ENCODE measurements at regions of chr4 and their contacts with region 1.

Region 1: DNA sequence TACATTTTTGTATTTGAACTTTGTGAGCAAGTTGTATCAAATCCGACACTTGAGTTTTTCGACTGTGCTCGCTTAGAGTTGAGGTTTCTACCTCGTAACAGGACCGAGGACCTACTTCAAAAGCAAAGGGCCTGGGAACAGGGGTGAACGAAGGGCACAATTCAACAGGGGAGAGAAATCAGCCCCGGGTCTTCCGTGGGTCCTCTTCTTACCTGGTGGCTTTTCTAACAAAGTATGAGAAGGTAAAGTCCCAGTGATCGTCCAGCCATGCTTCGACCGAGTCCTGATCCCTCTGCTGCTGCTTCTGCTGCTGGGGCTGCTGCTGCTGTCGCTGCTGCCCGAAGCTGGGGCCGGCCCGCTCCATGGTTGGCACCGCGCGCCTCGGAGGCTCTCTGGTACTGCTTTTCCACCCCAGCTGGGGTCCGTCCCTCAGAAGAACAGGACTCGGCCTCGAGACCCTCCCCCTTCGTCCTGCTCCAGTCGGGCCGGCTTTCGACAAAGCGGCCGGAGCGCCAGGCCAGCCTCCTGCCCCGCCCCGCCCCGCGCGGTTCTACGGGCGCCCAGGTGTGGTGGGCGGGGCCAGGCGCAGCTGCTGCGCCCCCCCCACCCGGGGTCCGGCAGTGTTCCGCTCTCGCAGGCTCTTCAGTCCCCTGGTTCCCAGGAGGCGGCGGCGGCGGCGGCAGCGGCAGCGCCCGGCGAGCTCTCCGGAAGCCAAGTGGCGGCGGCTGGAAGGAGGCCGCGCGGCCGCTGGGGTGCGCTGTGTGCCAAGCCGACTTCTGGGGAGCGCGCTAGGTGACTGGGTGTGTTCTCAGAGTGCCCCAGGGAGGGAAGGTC is at the start of gene PDE5A:
- DNase-seq: no peak
- H3K4me3 ChIP-seq: peak within 1 kb of the TSS; percentile 88
- CTCF ChIP-seq: peak; percentile 88

Region 2: GRCh38 chr4:118981839-118982381 is 646.6 kb before region 1 on chr4:
- CTCF ChIA-PET with region 1: interaction called, 14 read pairs
- POLR2A ChIA-PET with region 1: no interaction called
- DNase-seq: peak; percentile 96
- H3K4me3 ChIP-seq: no peak overlapping the region
- CTCF ChIP-seq: peak; percentile 59

Region 3: GRCh38 chr4:119227690-119228089 is 400.8 kb before region 1 on chr4:
- CTCF ChIA-PET with region 1: no interaction called
- POLR2A ChIA-PET with region 1: no interaction called
- DNase-seq: no peak
- H3K4me3 ChIP-seq: no peak overlapping the region
- CTCF ChIP-seq: no peak

Region 4: GRCh38 chr4:119337010-119337409 is 291.5 kb before region 1 on chr4:
- CTCF ChIA-PET with region 1: no interaction called
- POLR2A ChIA-PET with region 1: no interaction called
- DNase-seq: no peak
- H3K4me3 ChIP-seq: no peak overlapping the region
- CTCF ChIP-seq: no peak

Region 5: GRCh38 chr4:119615068-119615719 is 13.3 kb before region 1 on chr4:
- CTCF ChIA-PET with region 1: interaction called, 11 read pairs
- POLR2A ChIA-PET with region 1: no interaction called
- DNase-seq: no peak
- H3K4me3 ChIP-seq: no peak overlapping the region
- CTCF ChIP-seq: no peak

Region 6: GRCh38 chr4:119729835-119730670 is 101.5 kb after region 1 on chr4:
- CTCF ChIA-PET with region 1: interaction called, 22 read pairs
- POLR2A ChIA-PET with region 1: no interaction called
- DNase-seq: peak; percentile 77
- H3K4me3 ChIP-seq: no peak overlapping the region
- CTCF ChIP-seq: no peak

Region 7: DNA sequence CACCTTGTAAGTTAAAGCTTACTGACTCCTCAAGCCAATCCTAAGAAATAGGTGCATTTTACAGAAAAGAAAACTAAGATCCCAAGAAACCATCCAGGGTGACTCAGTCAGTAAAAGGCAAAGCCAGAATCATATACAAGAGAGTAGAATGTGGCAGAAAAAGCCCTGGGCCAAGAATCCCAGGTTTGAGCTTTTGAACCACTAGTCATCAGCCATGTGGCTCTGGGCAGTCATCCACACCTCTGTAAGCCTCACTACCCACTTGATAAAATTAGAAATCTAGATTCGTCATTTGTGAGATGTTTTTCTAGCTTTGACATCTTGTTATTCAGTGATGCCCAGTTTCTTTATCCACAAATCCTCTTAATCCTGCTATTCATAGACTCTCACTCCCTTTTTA is 122.2 kb after region 1 on chr4:
- CTCF ChIA-PET with region 1: interaction called, 15 read pairs
- POLR2A ChIA-PET with region 1: no interaction called
- DNase-seq: no peak
- H3K4me3 ChIP-seq: no peak overlapping the region
- CTCF ChIP-seq: no peak

Region 8: GRCh38 chr4:119785963-119786362 is 157.4 kb after region 1 on chr4:
- CTCF ChIA-PET with region 1: interaction called, 49 read pairs
- POLR2A ChIA-PET with region 1: no interaction called
- DNase-seq: no peak
- H3K4me3 ChIP-seq: no peak overlapping the region
- CTCF ChIP-seq: peak; percentile 16

Region 9: DNA sequence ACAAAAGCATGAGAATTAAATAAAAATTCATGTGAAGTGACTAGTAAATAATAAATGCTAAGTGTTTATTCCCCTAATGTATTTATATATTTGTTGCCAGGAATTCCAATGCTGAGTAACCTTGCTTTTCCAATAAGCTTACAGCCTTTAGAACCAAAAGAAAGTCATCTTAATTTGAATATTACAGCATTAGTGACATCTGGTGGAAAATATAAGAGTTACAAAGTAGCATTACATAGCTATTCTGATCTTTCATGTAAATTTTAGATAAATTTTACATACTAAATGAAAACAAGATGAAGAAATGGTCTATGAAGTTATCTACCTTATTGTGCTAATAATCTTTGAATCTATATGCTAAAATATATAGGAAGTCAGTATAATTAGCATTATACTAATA is 427.7 kb after region 1 on chr4:
- CTCF ChIA-PET with region 1: interaction called, 159 read pairs
- POLR2A ChIA-PET with region 1: no interaction called
- DNase-seq: no peak
- H3K4me3 ChIP-seq: no peak overlapping the region
- CTCF ChIP-seq: peak; percentile 10

Measured in AG04449 (cell line).